H1 (cell line): ENCODE measurements at regions of chr14 and their contacts with region 1.

Region 1: GRCh38 chr14:69600304-69600891 is 11.0 kb upstream of the SUSD6 start:
- DNase-seq: no peak
- H3K4me3 ChIP-seq: no peak overlapping the region
- H3K27ac ChIP-seq: no peak overlapping the region
- H3K4me1 ChIP-seq: peaks cover 0 to 4% (median under 1%) of the 10 kb centered on the region in 4 experiments; a peak in 2 of 7 replicates
- H3K27me3 ChIP-seq: no peaks in the 10 kb centered on the region
- CTCF ChIP-seq: no peak
- EP300 ChIP-seq: no peak
- POLR2A ChIP-seq: no peak
- RAD21 ChIP-seq: no peak

Region 2: DNA sequence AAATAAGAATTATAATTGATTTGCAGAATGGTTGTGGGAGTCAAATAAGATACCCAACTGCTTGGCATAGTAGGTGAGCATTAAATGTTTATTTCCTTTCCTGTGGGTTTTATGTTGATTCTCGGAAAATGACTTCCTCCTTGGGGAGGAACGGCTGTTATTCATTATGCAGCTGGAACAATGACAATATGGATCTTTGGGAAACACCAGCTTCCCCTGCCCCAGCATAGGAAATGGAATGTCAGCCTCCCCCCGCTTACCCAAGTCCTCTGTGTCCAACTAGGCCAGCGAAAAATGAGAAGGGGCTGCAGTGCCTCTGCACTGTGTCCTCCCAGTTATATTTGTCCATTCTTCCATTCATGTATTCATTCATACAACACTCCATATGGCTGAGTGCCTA is 14.0 kb before region 1 on chr14:
- CTCF ChIA-PET with region 1: interaction called, 33 read pairs
- POLR2A ChIA-PET with region 1: interaction called, 3 read pairs
- DNase-seq: no peak
- H3K4me3 ChIP-seq: no peak overlapping the region
- H3K27ac ChIP-seq: no peak overlapping the region
- H3K4me1 ChIP-seq: no peaks in the 10 kb centered on the region; a peak in 1 of 7 replicates
- H3K27me3 ChIP-seq: no peaks in the 10 kb centered on the region
- CTCF ChIP-seq: no peak
- EP300 ChIP-seq: no peak
- POLR2A ChIP-seq: no peak
- RAD21 ChIP-seq: no peak